ENCODE measurements at regions of chr10 and their contacts with region 1.

Region 1: GRCh38 chr10:124530215-124530665 is 68.6 kb downstream of the LHPP start:
- DNase-seq: peak; percentile 80 to 98 (median 91)

Region 2: DNA sequence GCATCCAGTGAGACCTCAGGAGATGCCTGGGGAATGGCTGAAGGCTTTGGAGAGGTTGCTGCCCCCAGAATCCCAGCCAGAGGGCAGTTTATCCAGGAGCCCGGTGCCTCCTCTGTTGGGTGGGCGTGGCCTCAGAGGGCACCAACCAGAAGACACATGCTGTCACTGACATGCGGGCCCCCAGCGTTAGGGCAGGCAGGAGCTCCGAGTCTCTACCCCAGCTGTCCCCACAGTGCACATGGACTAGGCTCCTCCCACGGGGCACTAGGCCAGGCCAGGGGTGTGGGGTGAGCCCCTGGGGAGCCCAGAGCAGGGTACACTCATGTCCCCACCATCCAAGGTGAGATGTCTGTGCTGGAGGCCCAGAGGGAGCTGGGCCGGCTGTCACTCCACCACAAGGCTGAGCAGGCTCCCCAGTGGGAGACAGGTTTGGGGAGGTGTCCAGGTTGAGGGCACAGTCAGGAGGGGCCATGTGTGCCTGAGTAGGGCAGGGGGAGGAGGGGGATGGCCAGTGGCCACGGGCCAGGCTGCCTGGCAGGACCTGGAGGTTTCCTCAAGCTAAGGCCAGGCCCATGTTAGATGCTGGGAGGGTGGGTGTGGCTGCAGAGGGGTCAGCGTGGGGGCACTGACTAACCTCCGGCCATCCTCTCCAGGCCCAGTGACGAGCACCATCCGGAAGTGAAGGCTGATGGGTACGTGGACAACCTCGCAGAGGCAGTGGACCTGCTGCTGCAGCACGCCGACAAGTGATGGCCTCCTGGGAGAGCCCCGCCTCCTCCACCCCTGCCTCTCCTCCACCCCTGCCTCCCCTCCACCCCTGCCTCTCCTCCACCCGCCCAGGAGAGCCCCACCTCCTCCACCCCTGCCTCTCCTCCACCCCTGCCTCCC is 82.6 kb after region 1 on chr10:
- intact Hi-C with region 1: loop called (anchors 10 kb)
- DNase-seq: no peak

Region 3: DNA sequence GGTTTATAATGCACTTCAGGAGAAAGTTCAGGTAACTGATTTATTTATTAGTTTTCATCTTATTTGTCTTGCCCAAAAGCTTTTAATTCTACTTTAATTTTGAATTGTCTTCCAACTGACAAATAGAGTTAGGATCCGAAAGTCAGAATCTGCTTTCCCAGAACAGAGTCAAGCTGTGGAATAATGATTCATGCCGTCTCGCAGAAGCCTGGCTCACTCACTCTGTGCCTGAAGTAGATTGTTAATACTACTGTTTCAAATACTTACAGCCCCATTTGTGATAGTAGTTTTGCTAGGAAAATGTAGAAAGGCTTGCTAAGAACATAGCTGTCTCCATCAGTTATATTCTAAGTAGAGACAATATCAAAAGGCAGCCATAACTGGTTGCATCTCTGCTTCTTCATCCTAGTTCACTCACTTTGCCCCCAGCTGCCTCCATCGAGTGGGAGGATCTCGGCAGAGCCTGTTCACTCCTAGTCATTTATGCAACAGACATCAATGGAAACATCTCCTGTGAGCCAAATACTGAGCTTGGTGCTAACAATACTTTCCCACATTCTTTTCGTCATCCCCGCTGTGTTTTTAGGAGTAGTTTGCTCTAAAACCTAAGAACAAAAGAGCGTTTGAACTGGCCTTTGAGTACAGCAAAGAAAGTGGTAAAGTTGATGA is 299.3 kb after region 1 on chr10:
- intact Hi-C with region 1: loop called (anchors 2 kb)
- DNase-seq: peak in 3 of 10 donors; percentile 11 to 87 (median 25)

Region 4: GRCh38 chr10:125177968-125178636 is 647.9 kb after region 1 on chr10:
- intact Hi-C with region 1: no loop called
- DNase-seq: no peak